ENCODE measurements at regions of chr14 and their contacts with region 1.

Region 1: GRCh38 chr14:94080471-94081289 is at the start of gene DDX24:
- DNase-seq: peak; percentile 99
- H3K4me3 Mint-ChIP-seq: peak within 1 kb of the TSS; percentile 87
- H3K27ac Mint-ChIP-seq: peak within 1 kb of the TSS; percentile 95
- H3K4me1 Mint-ChIP-seq: peaks cover 48% of the 10 kb centered on the region
- H3K27me3 Mint-ChIP-seq: no peaks in the 10 kb centered on the region
- total RNA-seq, gene DDX24: 262 and 286 TPM in 2 replicates

Region 2: DNA sequence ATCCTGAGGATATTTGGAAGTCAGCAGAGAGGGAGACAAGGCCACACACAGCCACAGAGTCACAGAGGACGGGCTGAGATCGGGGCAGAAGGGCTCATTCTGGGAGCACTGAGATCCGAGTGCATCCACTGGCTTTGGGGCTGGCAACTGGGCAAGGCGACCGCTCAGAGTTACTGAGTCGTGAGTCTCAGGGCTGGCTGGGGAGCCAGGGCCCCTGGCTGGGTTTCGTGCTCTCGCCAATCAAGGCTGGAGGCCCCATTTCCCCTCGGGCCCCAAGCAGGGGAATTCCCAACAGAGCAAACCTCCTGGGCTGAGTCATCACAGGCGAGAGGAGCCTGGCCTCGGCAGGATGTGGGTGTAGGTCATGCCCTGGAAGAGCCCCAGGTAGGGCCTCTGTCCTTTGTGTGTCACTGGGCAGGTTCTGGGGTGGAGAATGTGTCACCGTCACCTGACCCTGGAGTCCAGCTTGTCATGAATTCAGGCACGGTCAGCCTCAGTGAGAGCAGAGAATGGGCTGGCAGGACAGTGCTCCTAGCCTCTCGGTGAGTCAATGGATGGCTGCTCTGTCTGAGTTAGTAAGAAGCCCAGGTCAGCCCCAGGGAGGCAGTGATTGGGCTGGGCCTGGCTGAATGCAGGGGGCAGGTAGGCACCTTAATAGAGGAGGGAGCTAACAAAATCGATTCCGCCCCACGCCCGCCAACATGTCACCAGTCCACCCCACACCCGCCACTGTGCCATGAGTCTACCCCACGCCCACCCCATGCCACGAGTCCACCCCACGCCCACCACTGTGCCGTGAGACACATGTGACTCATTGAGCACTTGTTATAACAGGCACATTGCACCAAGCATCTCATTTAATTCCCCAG is 121.2 kb before region 1 on chr14:
- intact Hi-C with region 1: loop called (anchors 5 kb)
- DNase-seq: peak; percentile 98
- H3K4me3 Mint-ChIP-seq: peak overlapping the region; percentile 86
- H3K27ac Mint-ChIP-seq: peak overlapping the region; percentile 100
- H3K4me1 Mint-ChIP-seq: peaks cover 93% of the 10 kb centered on the region
- H3K27me3 Mint-ChIP-seq: no peaks in the 10 kb centered on the region

Region 3: DNA sequence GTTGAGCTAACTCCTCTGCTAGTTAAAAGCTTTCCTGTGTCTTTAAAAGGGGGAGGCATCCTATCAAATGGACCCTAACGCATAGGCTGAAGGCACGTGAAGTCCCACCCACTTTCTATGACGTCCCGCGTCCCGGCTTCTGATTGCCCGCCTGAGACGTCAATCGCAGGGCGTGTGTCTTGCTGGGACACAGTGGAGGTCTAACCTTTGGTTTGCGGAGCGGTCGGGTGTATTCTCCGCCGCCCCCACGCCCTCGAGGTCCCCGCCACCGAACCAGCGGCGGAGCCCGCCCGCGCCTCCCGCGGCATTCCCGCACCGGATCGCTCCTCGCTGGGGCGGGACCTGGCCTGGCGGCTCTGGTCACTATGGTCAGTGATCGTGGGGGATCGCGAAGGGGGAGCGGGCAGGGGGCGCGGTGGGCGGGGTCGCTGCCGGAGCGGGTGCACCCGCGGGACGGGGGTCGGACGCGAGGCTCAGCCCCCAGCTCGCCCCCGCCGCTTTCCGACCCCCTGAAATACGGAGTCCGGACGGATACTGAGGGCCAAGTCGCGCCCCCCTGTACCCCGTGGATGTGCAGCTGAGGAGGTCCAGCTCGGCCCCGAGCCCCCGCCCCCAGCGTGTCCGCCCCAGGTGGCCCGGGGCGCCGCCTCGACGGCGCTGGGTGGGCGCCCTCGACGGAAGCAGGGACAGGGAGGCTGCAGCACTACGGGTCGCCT is 54.3 kb before region 1 on chr14 and contains the start of gene OTUB2:
- intact Hi-C with region 1: loop called (anchors 5 kb)
- DNase-seq: peak; percentile 99
- H3K4me3 Mint-ChIP-seq: peak within 1 kb of the TSS; percentile 75
- H3K27ac Mint-ChIP-seq: peak within 1 kb of the TSS; percentile 52
- H3K4me1 Mint-ChIP-seq: peaks cover 41% of the 10 kb centered on the region
- H3K27me3 Mint-ChIP-seq: no peaks in the 10 kb centered on the region
- total RNA-seq, gene OTUB2: 1.3 and 1.7 TPM in 2 replicates

Region 4: GRCh38 chr14:94056579-94057308 is 23.9 kb before region 1 on chr14:
- intact Hi-C with region 1: loop called (anchors 1 kb)
- DNase-seq: peak; percentile 86
- H3K4me3 Mint-ChIP-seq: peak overlapping the region; percentile 45
- H3K27ac Mint-ChIP-seq: peak overlapping the region; percentile 73
- H3K4me1 Mint-ChIP-seq: peaks cover 53% of the 10 kb centered on the region
- H3K27me3 Mint-ChIP-seq: no peaks in the 10 kb centered on the region

Region 5: DNA sequence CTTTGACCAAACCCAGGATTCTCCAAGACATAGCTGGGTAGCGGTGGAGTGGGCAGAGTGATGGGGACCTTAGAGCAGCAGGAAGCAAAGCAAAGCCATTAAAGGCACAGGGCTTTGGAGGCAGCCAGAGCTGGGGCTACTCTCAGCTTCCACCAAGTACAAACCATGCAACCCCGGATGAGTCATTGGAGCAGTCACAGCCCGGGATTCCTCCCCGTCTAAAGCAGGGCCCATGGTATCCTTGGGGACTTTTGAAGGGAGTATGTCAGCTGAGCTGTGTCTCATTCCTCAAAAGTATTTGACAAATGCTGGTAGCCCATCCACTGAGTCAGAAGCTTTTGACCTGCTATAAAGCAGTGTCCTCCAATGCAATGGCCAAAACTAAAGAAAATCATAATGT is 20.2 kb after region 1 on chr14:
- intact Hi-C with region 1: no loop called
- DNase-seq: no peak
- H3K4me3 Mint-ChIP-seq: no peak overlapping the region
- H3K27ac Mint-ChIP-seq: no peak overlapping the region
- H3K4me1 Mint-ChIP-seq: no peaks in the 10 kb centered on the region
- H3K27me3 Mint-ChIP-seq: no peaks in the 10 kb centered on the region

Region 6: GRCh38 chr14:94173885-94174603 is 93.4 kb after region 1 on chr14 and contains the start of gene PPP4R4:
- intact Hi-C with region 1: loop called (anchors 1 kb)
- DNase-seq: peak; percentile 97
- H3K4me3 Mint-ChIP-seq: peak within 1 kb of the TSS; percentile 88
- H3K27ac Mint-ChIP-seq: peak within 1 kb of the TSS; percentile 70
- H3K4me1 Mint-ChIP-seq: peaks cover 17% of the 10 kb centered on the region
- H3K27me3 Mint-ChIP-seq: peaks cover 54% of the 10 kb centered on the region
- total RNA-seq, gene PPP4R4: 2.7 and 3.1 TPM in 2 replicates

Region 7: DNA sequence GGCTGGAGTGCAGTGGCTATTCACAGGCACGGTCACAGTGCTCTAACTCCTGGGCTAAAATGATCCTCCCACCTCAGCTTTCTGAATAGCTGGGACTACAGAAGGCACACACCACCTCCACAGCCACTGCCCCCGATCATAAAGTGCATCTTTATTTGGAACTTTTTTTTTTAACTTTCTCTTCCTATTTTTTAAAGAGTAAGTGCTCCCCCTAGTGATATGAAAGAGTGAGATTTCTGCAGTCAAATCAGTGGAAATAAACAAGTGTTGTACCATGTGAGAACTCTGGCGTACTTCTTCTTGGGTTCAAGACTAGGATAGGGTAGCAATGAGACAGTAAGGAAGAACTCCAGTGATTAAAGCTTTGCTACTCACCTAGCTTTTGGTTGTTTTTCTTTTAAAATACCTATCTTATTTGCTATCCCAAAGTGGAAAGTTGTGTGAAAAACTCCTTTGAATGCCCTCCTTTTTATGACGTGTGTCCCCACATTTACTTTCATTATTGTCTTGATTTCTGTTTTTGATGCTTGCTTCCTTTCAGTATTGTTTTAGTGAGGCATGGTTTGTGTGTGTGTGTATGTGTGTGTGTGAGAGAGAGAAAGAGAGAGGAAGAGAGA is 100.1 kb after region 1 on chr14:
- intact Hi-C with region 1: loop called (anchors 2 kb)
- DNase-seq: peak; percentile 76
- H3K4me3 Mint-ChIP-seq: peak overlapping the region; percentile 58
- H3K27ac Mint-ChIP-seq: peak overlapping the region; percentile 22
- H3K4me1 Mint-ChIP-seq: peaks cover 11% of the 10 kb centered on the region
- H3K27me3 Mint-ChIP-seq: peaks cover 25% of the 10 kb centered on the region

Measured in activated CD4-positive, alpha-beta T cell treated with anti-CD3 and anti-CD28 coated beads, Interleukin-2, amount 10 ng/mL, durations not matched to agents 24 days and 14 days (primary cell).